Activated B cell treated with CpG ODN at 0.5 μM for 24 hours (primary cell): ENCODE measurements at regions of chr9 and their contacts with region 1.

Region 1: DNA sequence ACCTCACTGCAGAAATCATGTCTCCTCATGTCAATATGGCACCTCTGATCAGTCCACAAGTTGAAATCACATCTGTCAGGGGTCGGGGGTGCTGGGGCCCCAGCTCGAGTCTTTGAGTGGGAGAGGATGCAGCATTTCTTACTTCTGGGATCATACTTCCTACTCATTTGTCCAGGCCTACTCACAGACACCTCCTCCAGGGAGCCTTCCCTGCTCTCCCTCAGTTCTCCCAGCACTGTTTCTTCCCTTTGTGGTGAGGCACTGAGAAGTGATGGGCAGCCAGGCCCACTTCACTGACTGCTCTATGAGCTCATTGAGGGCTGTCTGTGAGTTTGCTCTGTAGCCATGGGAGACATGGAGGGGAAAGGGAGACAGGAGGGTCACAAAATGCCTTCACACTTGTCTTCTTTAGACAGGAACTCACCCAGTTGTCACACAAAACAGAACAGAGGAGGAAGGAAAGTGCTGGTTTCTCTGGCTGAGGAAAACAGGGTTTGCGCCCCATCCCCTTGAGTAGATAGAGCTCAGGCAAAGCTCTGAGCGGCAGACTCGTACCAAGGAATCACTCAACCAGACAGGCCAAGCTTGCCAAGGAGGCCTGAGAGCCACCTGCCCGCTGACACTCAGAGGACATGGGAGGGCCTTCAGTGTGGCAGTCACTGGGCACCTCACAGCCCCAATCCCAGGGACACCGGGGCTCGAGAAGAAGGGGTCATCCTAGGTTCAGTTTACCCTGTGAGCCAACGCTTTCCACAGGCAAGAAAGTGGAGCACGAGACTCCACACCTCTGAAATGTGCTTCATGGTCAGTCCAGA is 152.9 kb downstream of the GABBR2 start:
- DNase-seq: no peak
- ATAC-seq: no peak
- H3K4me3 Mint-ChIP-seq: no peak overlapping the region
- H3K27ac Mint-ChIP-seq: no peak overlapping the region
- H3K4me1 Mint-ChIP-seq: no peaks in the 10 kb centered on the region
- H3K27me3 Mint-ChIP-seq: peaks cover 10% of the 10 kb centered on the region
- CTCF ChIP-seq: no peak

Region 2: DNA sequence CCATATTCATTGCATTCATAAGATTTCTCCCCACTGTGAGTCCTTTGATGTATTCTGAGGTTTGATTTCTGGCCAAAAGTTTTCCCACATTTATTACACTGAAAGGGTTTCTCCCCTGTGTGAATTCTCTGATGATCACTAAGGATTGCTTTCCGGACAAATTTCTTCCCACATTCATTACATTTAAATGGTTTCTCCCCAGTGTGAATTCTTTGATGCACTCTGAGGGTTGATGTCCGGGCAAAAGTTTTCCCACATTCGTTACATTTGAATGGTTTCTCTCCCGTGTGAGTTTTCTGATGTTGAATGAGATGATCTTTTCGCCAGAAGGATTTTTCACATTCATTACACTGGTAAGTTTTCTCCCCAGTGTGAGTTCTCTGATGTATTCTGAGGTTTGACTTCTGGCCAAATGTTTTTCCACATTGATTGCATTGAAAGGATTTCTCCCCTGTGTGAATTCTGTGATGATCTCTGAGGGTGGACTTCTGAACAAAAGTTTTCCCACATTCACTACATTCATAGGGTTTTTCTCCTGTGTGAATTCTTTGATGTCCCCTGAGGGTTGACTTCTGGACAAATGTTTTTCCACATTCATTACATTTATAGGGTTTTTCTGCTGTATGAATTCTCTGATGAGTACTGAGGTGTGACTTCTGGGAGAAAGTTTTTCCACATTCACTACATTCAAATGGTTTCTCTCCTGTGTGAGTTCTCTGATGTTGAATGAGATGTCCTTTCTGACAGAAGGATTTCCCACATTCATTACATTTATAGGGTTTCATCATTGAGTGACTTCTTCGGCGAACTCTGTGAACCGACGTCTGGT is 1796.8 kb before region 1 on chr9:
- CTCF ChIA-PET with region 1: no interaction called
- POLR2A ChIA-PET with region 1: no interaction called
- intact Hi-C with region 1: no loop called
- DNase-seq: no peak
- ATAC-seq: no peak
- H3K4me3 Mint-ChIP-seq: no peak overlapping the region
- H3K27ac Mint-ChIP-seq: no peak overlapping the region
- H3K4me1 Mint-ChIP-seq: no peaks in the 10 kb centered on the region
- H3K27me3 Mint-ChIP-seq: no peaks in the 10 kb centered on the region
- CTCF ChIP-seq: no peak

Region 3: DNA sequence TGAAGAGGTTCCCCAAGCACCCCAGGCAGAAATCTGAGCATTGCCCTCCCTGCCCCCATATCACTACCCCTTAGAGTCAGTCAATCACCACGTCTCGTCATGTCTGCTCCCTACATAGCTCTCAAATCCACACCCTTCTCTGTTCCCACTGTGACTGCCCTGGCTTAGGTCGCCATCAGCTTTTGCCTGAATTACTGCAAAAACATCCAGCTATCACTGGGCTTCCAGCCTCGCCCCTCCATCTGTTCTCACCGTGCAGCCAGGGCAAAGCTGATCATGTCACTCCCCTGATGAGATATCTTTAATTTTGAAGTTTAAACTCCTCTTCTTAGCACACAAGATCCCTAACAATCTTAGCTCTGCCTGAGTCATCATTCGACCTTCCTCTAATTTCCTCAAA is 210.8 kb before region 1 on chr9:
- CTCF ChIA-PET with region 1: no interaction called
- POLR2A ChIA-PET with region 1: no interaction called
- intact Hi-C with region 1: no loop called
- DNase-seq: no peak
- ATAC-seq: no peak
- H3K4me3 Mint-ChIP-seq: no peak overlapping the region
- H3K27ac Mint-ChIP-seq: no peak overlapping the region
- H3K4me1 Mint-ChIP-seq: no peaks in the 10 kb centered on the region
- H3K27me3 Mint-ChIP-seq: peaks cover 10% of the 10 kb centered on the region
- CTCF ChIP-seq: no peak

Region 4: GRCh38 chr9:98438666-98439065 is 117.2 kb before region 1 on chr9:
- CTCF ChIA-PET with region 1: no interaction called
- POLR2A ChIA-PET with region 1: no interaction called
- intact Hi-C with region 1: no loop called
- DNase-seq: no peak
- ATAC-seq: no peak
- H3K4me3 Mint-ChIP-seq: no peak overlapping the region
- H3K27ac Mint-ChIP-seq: no peak overlapping the region
- H3K4me1 Mint-ChIP-seq: no peaks in the 10 kb centered on the region
- H3K27me3 Mint-ChIP-seq: peaks cover 1% of the 10 kb centered on the region
- CTCF ChIP-seq: no peak

Region 5: DNA sequence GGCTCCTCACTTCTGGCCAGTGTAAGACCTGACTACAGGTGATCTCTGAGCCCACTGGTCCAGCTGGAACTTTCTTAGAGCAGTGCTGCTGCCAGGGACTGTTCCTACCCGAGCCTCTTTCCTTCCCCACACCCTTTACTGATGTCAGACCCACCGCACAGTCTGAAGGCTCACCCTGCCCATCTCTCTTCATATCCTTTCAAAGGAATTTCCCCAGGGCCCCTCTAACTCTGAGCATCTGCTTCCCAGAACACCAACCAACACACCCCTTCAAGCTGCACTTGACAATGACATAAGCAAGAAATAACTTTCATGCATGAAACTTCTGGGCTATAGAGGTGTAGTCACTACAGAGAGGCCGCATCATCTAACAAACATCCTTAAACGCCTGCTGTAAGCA is 33.2 kb after region 1 on chr9:
- CTCF ChIA-PET with region 1: no interaction called
- POLR2A ChIA-PET with region 1: no interaction called
- intact Hi-C with region 1: loop called (anchors 1 kb)
- DNase-seq: no peak
- ATAC-seq: no peak
- H3K4me3 Mint-ChIP-seq: no peak overlapping the region
- H3K27ac Mint-ChIP-seq: no peak overlapping the region
- H3K4me1 Mint-ChIP-seq: no peaks in the 10 kb centered on the region
- H3K27me3 Mint-ChIP-seq: peaks cover 15% of the 10 kb centered on the region
- CTCF ChIP-seq: no peak

Region 6: GRCh38 chr9:98607787-98608186 is 51.9 kb after region 1 on chr9:
- CTCF ChIA-PET with region 1: no interaction called
- POLR2A ChIA-PET with region 1: no interaction called
- intact Hi-C with region 1: no loop called
- DNase-seq: no peak
- ATAC-seq: no peak
- H3K4me3 Mint-ChIP-seq: no peak overlapping the region
- H3K27ac Mint-ChIP-seq: no peak overlapping the region
- H3K4me1 Mint-ChIP-seq: no peaks in the 10 kb centered on the region
- H3K27me3 Mint-ChIP-seq: peaks cover 8% of the 10 kb centered on the region
- CTCF ChIP-seq: no peak